ENCODE measurements at regions of chr14 and their contacts with region 1.

Region 1: DNA sequence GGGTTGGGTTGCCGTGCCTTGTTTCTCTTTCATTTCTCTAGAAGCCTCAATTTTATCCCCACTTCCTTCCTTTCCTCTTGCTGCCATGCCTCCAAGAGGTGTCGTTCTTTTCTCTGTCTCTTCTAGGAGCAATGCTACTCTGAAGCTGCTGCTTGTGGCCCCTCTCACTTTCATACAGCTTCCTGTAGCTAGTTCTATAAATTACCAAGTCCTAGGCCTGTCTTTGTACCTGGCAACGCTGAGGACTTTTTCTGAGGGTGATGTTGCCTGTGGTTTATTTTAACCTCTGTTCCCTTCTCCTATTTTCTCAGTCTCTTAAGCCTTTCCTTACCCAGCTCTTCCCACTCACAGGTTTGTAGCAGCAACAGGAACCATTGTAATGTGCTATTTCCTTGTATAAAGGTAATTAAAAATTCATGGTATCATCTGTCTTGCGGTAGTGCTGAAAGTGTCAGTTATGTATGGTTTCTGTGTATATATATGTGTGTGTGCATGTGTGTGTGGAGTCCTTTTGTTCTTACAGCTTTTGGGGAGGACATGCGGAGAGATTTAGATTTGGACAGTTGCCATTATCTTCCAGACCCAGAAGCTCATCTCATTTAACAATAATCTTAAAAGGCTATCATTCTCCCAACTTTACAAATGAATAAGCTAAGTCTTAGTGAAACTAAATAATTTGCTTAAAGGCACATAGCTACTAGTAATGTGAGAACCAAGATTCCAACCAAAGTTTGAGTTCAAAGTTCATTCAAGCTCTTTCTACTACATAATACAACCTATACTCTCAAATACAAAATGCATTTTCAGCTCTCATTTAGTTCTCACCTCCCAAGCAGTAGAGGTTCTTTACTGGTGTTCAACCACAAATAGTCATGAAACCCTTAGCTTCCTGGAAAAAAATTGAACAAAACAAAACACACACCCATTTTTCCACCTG is 43.8 kb downstream of the DDHD1 start:
- DNase-seq: peak; percentile 92
- H3K4me3 Mint-ChIP-seq: no peak overlapping the region
- H3K27ac Mint-ChIP-seq: no peak overlapping the region
- H3K4me1 Mint-ChIP-seq: peaks cover 30% of the 10 kb centered on the region
- H3K27me3 Mint-ChIP-seq: no peaks in the 10 kb centered on the region

Region 2: DNA sequence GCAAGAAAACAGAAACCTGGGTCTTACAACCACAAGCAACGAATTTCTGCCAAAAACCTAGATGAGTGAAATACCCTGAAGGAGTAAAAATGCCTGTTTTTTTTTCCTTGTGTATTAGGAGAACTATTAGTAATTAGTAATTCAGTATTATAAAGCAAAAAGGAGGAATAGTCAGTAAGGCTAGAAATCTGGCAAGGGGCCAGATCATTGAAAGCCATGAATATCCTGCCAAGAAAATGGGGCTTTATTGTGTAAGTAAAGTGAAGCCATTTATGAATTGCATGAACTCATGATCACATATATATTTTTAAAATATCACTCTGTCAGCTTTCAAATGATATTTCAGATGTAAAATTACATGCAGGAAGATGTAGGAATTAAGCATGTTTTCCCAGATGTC is 614.9 kb before region 1 on chr14:
- intact Hi-C with region 1: no loop called
- DNase-seq: no peak
- H3K4me3 Mint-ChIP-seq: no peak overlapping the region
- H3K27ac Mint-ChIP-seq: no peak overlapping the region
- H3K4me1 Mint-ChIP-seq: no peaks in the 10 kb centered on the region
- H3K27me3 Mint-ChIP-seq: no peaks in the 10 kb centered on the region

Region 3: GRCh38 chr14:53126731-53127130 is 17.4 kb after region 1 on chr14:
- intact Hi-C with region 1: loop called (anchors 2 kb)
- DNase-seq: peak; percentile 8
- H3K4me3 Mint-ChIP-seq: peak overlapping the region; percentile 68
- H3K27ac Mint-ChIP-seq: peak overlapping the region; percentile 75
- H3K4me1 Mint-ChIP-seq: peaks cover 35% of the 10 kb centered on the region
- H3K27me3 Mint-ChIP-seq: no peaks in the 10 kb centered on the region

Region 4: GRCh38 chr14:53144244-53144643 is 34.9 kb after region 1 on chr14:
- intact Hi-C with region 1: loop called (anchors 1 kb)
- DNase-seq: peak; percentile 74
- H3K4me3 Mint-ChIP-seq: no peak overlapping the region
- H3K27ac Mint-ChIP-seq: peak overlapping the region; percentile 75
- H3K4me1 Mint-ChIP-seq: peaks cover 56% of the 10 kb centered on the region
- H3K27me3 Mint-ChIP-seq: no peaks in the 10 kb centered on the region

Region 5: DNA sequence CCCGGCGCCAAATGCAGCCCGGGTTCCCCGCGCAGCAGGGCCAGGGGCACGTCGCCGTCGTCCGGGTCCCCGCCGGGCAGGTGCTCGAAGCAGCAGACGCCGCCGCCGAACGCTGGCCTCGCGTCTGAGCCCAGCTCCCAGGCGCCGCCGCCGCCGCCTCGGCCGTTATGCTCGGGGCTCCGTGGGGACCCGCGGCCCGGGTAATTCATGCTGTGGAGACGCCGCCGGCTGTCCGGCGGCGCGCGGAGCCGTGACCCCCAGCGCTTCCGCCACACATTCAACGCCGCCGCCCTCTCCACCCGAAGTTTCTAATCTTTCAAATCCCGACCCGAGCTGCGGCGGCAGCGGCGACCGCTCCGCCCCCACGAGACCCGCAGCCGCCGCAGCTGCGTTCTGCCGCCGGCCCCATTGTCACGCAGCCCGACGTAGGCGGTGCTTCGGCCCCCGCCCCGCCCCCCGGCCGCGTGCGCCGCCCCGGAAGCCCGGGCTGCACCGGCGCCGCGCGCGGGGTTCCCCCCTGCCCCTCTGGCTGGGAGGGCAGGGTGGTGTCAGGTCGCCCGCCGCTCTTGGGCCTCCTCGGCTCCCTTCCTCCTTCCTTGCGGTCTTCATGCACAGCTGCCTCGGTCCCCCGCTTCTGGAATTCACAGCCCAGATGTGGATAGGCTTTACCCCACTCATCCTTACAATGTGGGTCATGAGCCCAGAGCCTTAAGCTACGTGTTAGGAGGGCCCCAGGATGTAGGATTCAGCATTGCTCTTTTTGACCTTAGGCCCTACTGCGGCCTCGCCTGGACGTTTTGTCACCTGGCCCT is 43.7 kb after region 1 on chr14 and contains the start of gene DDHD1:
- intact Hi-C with region 1: loop called (anchors 1 kb)
- DNase-seq: peak; percentile 96
- H3K4me3 Mint-ChIP-seq: peak within 1 kb of the TSS; percentile 100
- H3K27ac Mint-ChIP-seq: peak within 1 kb of the TSS; percentile 99
- H3K4me1 Mint-ChIP-seq: peaks cover 44% of the 10 kb centered on the region
- H3K27me3 Mint-ChIP-seq: no peaks in the 10 kb centered on the region
- total RNA-seq, gene DDHD1: 67.9 and 70.2 TPM in 2 replicates

Region 6: GRCh38 chr14:53180268-53181221 is 71.2 kb after region 1 on chr14:
- intact Hi-C with region 1: loop called (anchors 1 kb)
- DNase-seq: peak; percentile 82
- H3K4me3 Mint-ChIP-seq: peak overlapping the region; percentile 26
- H3K27ac Mint-ChIP-seq: peak overlapping the region; percentile 74
- H3K4me1 Mint-ChIP-seq: peaks cover 36% of the 10 kb centered on the region
- H3K27me3 Mint-ChIP-seq: peaks cover 1% of the 10 kb centered on the region

Region 7: GRCh38 chr14:53190938-53191337 is 81.6 kb after region 1 on chr14:
- intact Hi-C with region 1: loop called (anchors 1 kb)
- DNase-seq: peak; percentile 67
- H3K4me3 Mint-ChIP-seq: peak overlapping the region; percentile 36
- H3K27ac Mint-ChIP-seq: peak overlapping the region; percentile 95
- H3K4me1 Mint-ChIP-seq: peaks cover 30% of the 10 kb centered on the region
- H3K27me3 Mint-ChIP-seq: peaks cover 4% of the 10 kb centered on the region